ENCODE measurements at regions of chr18 and their contacts with region 1.

Region 1: DNA sequence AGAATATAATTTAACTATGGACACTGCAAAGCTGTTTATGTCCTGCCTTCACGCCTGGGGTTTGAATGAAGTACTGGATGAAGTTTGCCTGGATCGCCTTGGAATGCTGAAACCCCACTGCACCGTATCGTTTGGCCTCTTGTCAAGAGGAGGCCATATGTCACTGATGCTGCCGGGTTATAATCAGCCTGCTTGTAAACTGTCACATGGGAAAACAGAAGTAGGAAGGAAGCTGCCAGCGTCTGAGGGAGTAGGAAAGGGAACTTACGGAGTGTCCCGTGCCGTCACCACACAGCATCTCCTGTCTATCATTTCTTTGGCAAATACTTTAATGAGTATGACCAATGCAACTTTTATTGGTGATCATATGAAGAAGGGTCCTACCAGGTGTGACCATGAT is 105.8 kb downstream of the WDR7 start:
- DNase-seq: no peak
- H3K4me3 ChIP-seq: no peak overlapping the region
- H3K27ac ChIP-seq: no peak overlapping the region
- H3K4me1 ChIP-seq: no peaks in the 10 kb centered on the region
- H3K27me3 ChIP-seq: no peaks in the 10 kb centered on the region
- CTCF ChIP-seq: no peak
- POLR2A ChIP-seq: no peak

Region 2: DNA sequence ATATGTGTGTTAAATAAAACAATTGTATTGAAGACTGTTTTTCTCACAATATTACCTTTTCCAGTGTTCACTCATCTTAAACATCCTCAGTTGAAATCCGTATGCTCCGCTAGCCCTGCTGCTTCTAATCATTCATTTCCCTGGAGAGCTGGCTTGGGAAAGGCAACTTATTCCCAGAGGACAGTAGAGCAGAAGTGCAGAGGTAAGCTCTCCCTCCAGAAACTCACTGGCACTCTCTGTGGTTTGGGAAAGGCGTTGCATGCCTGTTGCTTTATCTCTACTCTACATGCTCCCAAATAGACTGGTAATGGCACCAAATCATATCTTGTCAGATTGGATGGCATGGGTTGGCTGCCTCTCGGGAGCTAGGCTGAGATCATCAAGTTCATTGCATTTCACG is 272.8 kb after region 1 on chr18:
- CTCF ChIA-PET with region 1: no interaction called
- POLR2A ChIA-PET with region 1: no interaction called
- dilution Hi-C with region 1: no loop called
- intact Hi-C with region 1: loop called (anchors 10 kb)
- DNase-seq: no peak
- H3K4me3 ChIP-seq: no peak overlapping the region
- H3K27ac ChIP-seq: no peak overlapping the region
- H3K4me1 ChIP-seq: no peaks in the 10 kb centered on the region
- H3K27me3 ChIP-seq: no peaks in the 10 kb centered on the region
- CTCF ChIP-seq: no peak
- POLR2A ChIP-seq: no peak